ENCODE measurements at regions of chr3 and their contacts with region 1.

Region 1: GRCh38 chr3:80785470-80785869 is 976.0 kb downstream of the GBE1 start:
- DNase-seq: no peak
- ATAC-seq: no peak
- H3K4me3 ChIP-seq: no peak overlapping the region
- H3K27ac ChIP-seq: no peak overlapping the region
- H3K4me1 ChIP-seq: no peaks in the 10 kb centered on the region
- H3K27me3 ChIP-seq: no peaks in the 10 kb centered on the region
- CTCF ChIP-seq: peak; percentile 22; the same call in 1 of the 2 replicates

Region 2: GRCh38 chr3:81242871-81243270 is 457.4 kb after region 1 on chr3:
- CTCF ChIA-PET with region 1: no interaction called
- POLR2A ChIA-PET with region 1: no interaction called
- in situ Hi-C with region 1: no loop called
- intact Hi-C with region 1: loop called (anchors 5 kb)
- DNase-seq: no peak
- ATAC-seq: no peak
- H3K4me3 ChIP-seq: no peak overlapping the region
- H3K27ac ChIP-seq: no peak overlapping the region
- H3K4me1 ChIP-seq: no peaks in the 10 kb centered on the region
- H3K27me3 ChIP-seq: no peaks in the 10 kb centered on the region
- CTCF ChIP-seq: peak; percentile 41; the same call in 1 of the 2 replicates

Measured in Panc1 (cell line).